ENCODE measurements at regions of chr20 and their contacts with region 1.

Region 1: GRCh38 chr20:44310664-44311639 is at the start of gene FITM2:
- DNase-seq: peak; percentile 100
- H3K4me3 ChIP-seq: peak within 1 kb of the TSS; percentile 77
- H3K4me3 Mint-ChIP-seq: peak within 1 kb of the TSS; percentile 84
- H3K27ac Mint-ChIP-seq: peak within 1 kb of the TSS; percentile 48
- H3K4me1 ChIP-seq: peaks cover 10% of the 10 kb centered on the region
- H3K4me1 Mint-ChIP-seq: peaks cover 13% of the 10 kb centered on the region
- H3K27me3 ChIP-seq: no peaks in the 10 kb centered on the region
- H3K27me3 Mint-ChIP-seq: no peaks in the 10 kb centered on the region
- CTCF ChIP-seq: peak; percentile 100
- total RNA-seq, gene FITM2: 13.9 and 14.4 TPM in 2 replicates

Region 2: DNA sequence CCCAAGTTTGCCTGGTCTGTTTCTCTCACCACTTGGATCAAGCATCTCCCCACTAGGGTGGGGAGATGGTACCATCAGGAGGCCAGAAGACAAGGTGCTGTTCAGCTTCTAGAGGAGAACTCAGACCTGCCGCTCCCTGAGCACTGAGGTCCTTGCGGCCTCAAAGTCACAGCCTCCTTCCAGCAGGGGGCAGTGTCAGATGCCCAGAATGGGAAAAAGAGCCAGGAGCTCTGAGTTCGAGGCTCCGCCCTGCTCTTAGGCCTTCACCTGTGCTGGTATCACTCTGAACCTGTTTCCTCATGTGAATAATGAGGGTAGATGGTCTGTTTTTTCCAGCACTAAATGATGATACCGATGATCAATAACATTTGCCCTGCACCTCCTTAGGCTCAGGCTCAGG is 327.6 kb before region 1 on chr20:
- CTCF ChIA-PET with region 1: no interaction called
- POLR2A ChIA-PET with region 1: no interaction called
- intact Hi-C with region 1: no loop called
- DNase-seq: peak in 1 of 2 experiments; percentile 35
- H3K4me3 ChIP-seq: no peak overlapping the region
- H3K4me3 Mint-ChIP-seq: no peak overlapping the region
- H3K27ac Mint-ChIP-seq: no peak overlapping the region
- H3K4me1 ChIP-seq: no peaks in the 10 kb centered on the region
- H3K4me1 Mint-ChIP-seq: no peaks in the 10 kb centered on the region
- H3K27me3 ChIP-seq: no peaks in the 10 kb centered on the region
- H3K27me3 Mint-ChIP-seq: peaks cover 27% of the 10 kb centered on the region
- CTCF ChIP-seq: peak; percentile 43 to 46

Region 3: DNA sequence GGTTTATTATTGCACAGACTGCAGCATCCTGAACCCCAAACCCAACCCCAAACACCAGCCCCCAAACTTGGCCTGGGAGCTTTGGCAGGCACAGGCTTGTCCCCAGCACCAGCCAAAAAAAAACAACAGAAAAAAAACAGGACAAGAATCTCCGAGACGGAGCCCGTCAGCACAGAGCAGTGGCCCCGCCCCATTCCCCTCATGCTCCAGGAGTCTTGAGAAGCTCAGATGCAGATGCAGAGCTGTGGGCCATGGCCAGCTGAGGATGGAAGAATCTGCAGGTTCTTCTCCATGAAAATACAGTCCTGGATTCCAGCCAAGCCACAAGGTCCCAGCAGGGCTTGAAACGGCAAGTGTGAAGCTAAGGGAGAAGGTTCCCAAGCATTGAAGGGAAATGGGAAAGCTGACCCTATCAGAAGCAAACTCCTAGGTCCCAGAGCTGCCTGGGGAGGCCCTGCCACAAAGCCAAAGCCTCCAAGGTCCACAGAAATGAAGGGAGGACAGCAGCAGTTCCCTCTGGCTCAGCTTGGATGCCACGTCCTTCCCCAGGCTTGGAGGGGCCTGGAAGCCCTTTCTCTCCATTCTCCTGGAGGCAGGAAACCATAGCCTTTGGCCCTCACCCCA is 199.1 kb before region 1 on chr20:
- CTCF ChIA-PET with region 1: interaction called, 4 read pairs
- POLR2A ChIA-PET with region 1: no interaction called
- intact Hi-C with region 1: loop called (anchors 2 kb)
- DNase-seq: peak in 1 of 2 experiments; percentile 47
- H3K4me3 ChIP-seq: no peak overlapping the region
- H3K4me3 Mint-ChIP-seq: no peak overlapping the region
- H3K27ac Mint-ChIP-seq: no peak overlapping the region
- H3K4me1 ChIP-seq: no peaks in the 10 kb centered on the region
- H3K4me1 Mint-ChIP-seq: no peaks in the 10 kb centered on the region
- H3K27me3 ChIP-seq: no peaks in the 10 kb centered on the region
- H3K27me3 Mint-ChIP-seq: peaks cover 2% of the 10 kb centered on the region
- CTCF ChIP-seq: no peak

Region 4: DNA sequence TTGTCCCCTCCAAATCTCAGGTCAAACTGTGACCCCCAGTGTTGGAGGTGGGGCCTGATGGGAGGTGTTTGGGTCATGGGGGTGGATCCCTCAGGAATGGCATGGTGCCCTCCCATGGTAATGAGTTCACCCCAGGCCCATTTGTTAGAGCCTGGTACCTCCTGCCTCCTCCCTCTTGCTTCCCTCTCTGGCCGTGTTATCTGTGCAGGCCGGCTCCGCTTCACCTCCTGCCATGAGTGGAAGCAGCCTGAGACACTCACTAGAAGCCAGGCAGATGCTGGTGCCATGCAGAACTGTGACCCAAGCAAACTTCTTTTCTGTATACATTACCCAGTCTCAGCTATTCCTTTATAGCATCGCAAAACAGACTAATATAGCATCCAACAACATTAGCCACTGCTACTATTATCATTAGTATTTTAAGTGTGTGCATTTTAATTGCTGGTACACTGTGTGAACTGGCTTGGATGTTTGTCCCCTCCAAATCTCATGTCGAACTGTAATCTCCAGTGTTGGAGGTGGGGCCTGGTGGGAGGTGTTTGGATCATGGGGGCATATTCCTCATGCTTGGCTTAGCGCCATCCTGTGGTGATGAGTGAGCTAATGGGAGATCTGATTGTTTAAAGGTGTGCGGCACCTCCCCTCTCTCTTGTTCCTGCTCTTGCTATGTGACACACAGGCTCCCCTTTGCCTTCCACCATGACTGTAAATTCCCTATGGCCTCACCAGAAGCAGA is 88.2 kb before region 1 on chr20:
- CTCF ChIA-PET with region 1: interaction called, 244 read pairs
- POLR2A ChIA-PET with region 1: interaction called, 6 read pairs
- intact Hi-C with region 1: no loop called
- DNase-seq: no peak
- H3K4me3 ChIP-seq: no peak overlapping the region
- H3K4me3 Mint-ChIP-seq: no peak overlapping the region
- H3K27ac Mint-ChIP-seq: no peak overlapping the region
- H3K4me1 ChIP-seq: peaks cover 37% of the 10 kb centered on the region
- H3K4me1 Mint-ChIP-seq: peaks cover 34% of the 10 kb centered on the region
- H3K27me3 ChIP-seq: no peaks in the 10 kb centered on the region
- H3K27me3 Mint-ChIP-seq: no peaks in the 10 kb centered on the region
- CTCF ChIP-seq: peak in 1 of 2 experiments; percentile 8

Region 5: DNA sequence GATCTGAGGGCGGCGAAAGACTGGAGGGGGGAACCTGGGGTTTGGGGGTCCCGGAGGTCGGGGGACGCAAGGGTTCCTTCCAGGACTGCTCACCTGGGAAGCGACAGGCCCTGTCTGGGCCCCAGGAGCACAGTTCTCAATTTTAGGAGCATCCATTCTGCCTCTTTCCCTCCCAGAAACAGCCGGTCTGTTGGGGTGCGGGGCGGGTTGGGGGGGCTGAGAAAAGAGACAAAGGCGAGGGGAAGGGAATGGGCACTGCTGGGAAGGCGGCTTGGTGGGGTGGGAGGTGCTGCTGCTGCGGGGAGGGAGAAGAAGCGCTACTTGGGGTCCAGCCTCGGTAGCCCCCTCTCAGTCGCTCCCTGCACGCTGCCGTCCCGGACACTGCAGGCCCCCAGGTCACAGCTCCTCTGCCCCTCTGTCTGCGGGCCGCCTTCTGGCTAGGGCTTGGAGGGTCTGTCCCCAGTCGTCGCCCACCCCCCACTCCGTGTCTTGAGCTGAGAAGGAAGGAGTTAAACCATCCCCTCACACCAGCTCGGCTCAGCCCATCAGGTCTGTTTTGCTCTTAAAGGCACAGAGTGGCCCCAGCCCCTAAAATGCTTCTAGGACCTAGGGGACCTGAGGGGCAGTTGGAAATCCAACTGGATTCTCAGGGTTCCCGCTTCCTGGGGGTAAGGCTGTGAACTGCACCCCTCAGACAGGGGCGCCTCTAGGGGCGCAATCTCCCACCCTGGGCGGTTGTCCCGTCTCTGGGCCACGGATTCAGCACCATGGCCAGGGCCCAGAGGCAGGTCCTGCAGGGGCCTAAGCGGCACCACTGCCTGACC is 63.2 kb before region 1 on chr20:
- CTCF ChIA-PET with region 1: interaction called, 18 read pairs
- POLR2A ChIA-PET with region 1: no interaction called
- intact Hi-C with region 1: loop called (anchors 1 kb)
- DNase-seq: peak; percentile 84 to 95
- H3K4me3 ChIP-seq: no peak overlapping the region
- H3K4me3 Mint-ChIP-seq: no peak overlapping the region
- H3K27ac Mint-ChIP-seq: no peak overlapping the region
- H3K4me1 ChIP-seq: no peaks in the 10 kb centered on the region
- H3K4me1 Mint-ChIP-seq: no peaks in the 10 kb centered on the region
- H3K27me3 ChIP-seq: no peaks in the 10 kb centered on the region
- H3K27me3 Mint-ChIP-seq: peaks cover 5% of the 10 kb centered on the region
- CTCF ChIP-seq: peak; percentile 98 to 100

Region 6: DNA sequence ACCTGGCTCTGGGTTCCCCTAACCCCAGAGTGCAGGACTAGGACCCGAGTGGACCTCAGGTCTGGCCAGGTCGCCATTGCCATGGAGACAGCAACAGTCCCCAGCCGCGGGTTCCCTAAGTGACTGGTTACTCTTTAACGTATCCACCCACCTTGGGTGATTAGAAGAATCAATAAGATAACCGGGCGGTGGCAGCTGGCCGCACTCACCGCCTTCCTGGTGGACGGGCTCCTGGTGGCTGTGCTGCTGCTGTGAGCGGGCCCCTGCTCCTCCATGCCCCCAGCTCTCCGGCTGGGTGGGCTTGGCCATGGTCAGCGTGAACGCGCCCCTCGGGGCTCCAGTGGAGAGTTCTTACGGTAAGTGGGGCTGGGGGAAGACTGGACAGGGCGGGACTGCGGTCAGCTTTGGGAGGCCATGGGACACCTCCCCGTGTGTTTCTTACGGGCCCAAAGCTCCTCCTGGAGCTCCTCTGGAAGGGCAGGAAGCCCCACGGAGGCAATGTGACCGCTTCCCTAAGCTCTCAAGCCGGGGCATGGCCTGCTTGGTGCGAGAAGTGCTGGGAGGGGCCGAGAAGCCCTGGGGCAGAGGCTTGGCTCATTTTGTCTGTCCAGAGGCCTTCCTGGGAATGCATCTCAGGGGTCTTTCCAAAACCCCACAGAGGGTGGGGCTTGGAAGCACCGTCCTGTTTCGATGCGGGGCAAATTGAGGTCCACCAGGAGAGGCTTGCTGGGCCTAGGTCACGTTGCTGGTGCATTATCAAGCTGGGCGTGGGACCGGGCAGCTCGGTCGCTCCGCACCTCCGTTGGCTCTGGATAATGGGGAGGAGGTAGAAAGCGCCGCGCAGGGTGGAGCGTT is 44.8 kb after region 1 on chr20 and contains the start of gene HNF4A:
- CTCF ChIA-PET with region 1: interaction called, 8 read pairs
- POLR2A ChIA-PET with region 1: interaction called, 7 read pairs
- intact Hi-C with region 1: loop called (anchors 2 kb)
- DNase-seq: peak; percentile 96 to 97
- H3K4me3 ChIP-seq: peak within 1 kb of the TSS; percentile 77
- H3K4me3 Mint-ChIP-seq: peak within 1 kb of the TSS; percentile 93
- H3K27ac Mint-ChIP-seq: peak within 1 kb of the TSS; percentile 98
- H3K4me1 ChIP-seq: peaks cover 48% of the 10 kb centered on the region
- H3K4me1 Mint-ChIP-seq: peaks cover 41% of the 10 kb centered on the region
- H3K27me3 ChIP-seq: no peaks in the 10 kb centered on the region
- H3K27me3 Mint-ChIP-seq: no peaks in the 10 kb centered on the region
- CTCF ChIP-seq: no peak
- total RNA-seq, gene HNF4A: 256 and 292 TPM in 2 replicates

Region 7: GRCh38 chr20:44409132-44409600 is 98.2 kb after region 1 on chr20:
- CTCF ChIA-PET with region 1: interaction called, 15 read pairs
- POLR2A ChIA-PET with region 1: no interaction called
- intact Hi-C with region 1: no loop called
- DNase-seq: no peak
- H3K4me3 ChIP-seq: no peak overlapping the region
- H3K4me3 Mint-ChIP-seq: no peak overlapping the region
- H3K27ac Mint-ChIP-seq: peak overlapping the region; percentile 86
- H3K4me1 ChIP-seq: peaks cover 97% of the 10 kb centered on the region
- H3K4me1 Mint-ChIP-seq: peaks cover 74% of the 10 kb centered on the region
- H3K27me3 ChIP-seq: no peaks in the 10 kb centered on the region
- H3K27me3 Mint-ChIP-seq: no peaks in the 10 kb centered on the region
- CTCF ChIP-seq: no peak